ENCODE measurements at regions of chr17 and their contacts with region 1.

Region 1: GRCh38 chr17:73371285-73371684 is 59.5 kb upstream of the CDC42EP4 start:
- DNase-seq: no peak
- ATAC-seq: no peak
- H3K4me3 ChIP-seq: no peak overlapping the region
- H3K27ac ChIP-seq: no peak overlapping the region
- H3K4me1 ChIP-seq: peaks cover 6 to 7% of the 10 kb centered on the region in 2 donors
- H3K27me3 ChIP-seq: no peaks in the 10 kb centered on the region
- CTCF ChIP-seq: no peak
- POLR2A ChIP-seq: no peak

Region 2: GRCh38 chr17:72725433-72726068 is 645.7 kb before region 1 on chr17:
- in situ Hi-C with region 1: loop called in 3 of 4 experiments (anchors 25 kb)
- intact Hi-C with region 1: loop called (anchors 5 kb)
- DNase-seq: no peak
- ATAC-seq: peak in 1 of 2 donors; percentile 30
- H3K4me3 ChIP-seq: no peak overlapping the region
- H3K27ac ChIP-seq: no peak overlapping the region
- H3K4me1 ChIP-seq: no peaks in the 10 kb centered on the region
- H3K27me3 ChIP-seq: no peaks in the 10 kb centered on the region
- CTCF ChIP-seq: peak; percentile 33 to 71 (median 55)
- POLR2A ChIP-seq: no peak

Region 3: DNA sequence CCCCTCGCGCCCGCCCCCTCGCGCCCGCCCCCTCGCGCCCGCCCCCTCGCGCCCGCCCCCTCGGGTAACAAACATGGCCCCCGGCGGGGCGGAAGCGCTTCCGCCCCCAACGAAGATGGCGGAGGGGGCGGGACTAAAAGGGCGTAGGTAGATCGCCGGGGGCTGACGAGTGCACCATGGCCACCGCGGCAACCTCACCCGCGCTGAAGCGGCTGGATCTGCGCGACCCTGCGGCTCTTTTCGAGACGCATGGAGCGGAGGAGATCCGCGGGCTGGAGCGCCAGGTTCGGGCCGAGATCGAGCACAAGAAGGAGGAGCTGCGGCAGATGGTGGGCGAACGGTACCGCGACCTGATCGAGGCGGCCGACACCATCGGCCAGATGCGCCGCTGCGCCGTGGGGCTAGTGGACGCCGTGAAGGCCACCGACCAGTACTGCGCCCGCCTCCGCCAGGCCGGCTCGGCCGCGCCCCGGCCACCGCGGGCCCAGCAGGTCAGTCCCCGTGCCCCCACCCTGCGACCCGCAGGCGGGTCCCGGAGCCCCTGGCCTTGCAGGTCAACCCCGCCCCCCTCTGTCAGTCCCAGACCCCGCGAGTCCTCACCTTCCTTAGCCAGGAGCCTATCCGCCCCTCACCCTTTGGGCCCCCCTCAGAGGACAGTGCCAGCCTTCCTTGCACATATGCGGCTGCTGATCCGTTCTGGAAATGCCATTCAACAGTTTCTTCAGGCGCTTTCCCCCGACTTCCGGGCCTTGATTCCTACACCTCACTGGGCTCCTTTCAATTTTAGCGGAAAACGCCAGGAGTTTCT is 178.2 kb before region 1 on chr17 and contains the start of gene COG1:
- in situ Hi-C with region 1: loop called in 1 of 4 experiments (anchors 10 kb)
- intact Hi-C with region 1: loop called (anchors 2 kb)
- DNase-seq: peak; percentile 59 to 82
- ATAC-seq: peak; percentile 83 to 85
- H3K4me3 ChIP-seq: peak within 1 kb of the TSS; percentile 55 to 100 (median 86)
- H3K27ac ChIP-seq: peak within 1 kb of the TSS; percentile 92 to 97 (median 95)
- H3K4me1 ChIP-seq: peaks cover 13 to 17% of the 10 kb centered on the region in 2 donors
- H3K27me3 ChIP-seq: no peaks in the 10 kb centered on the region
- CTCF ChIP-seq: no peak
- POLR2A ChIP-seq: peak in 1 of 2 donors; percentile 14
- total RNA-seq, gene COG1: 21.2 to 34.7 (median 26.7) TPM

Region 4: DNA sequence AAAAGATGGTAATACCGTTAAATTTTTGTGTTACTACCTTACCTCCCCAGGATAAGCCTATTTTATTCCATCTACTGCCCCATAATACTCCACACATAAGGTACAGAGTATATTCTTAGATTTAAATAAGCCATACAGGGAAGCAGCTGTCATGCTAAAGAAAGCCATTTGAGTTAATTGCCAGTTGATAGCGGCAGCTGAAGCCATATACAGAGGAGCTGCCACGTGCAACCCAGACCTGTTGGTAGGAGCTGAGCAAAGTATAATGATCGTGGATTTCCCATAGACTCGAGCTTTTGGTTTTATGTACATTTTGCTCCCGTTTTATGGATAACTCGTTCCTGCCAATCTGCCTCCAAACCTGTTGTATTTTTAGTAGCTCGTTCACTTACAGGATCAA is 121.6 kb before region 1 on chr17:
- in situ Hi-C with region 1: loop called in 2 of 4 experiments (anchors 5 kb)
- intact Hi-C with region 1: no loop called
- DNase-seq: no peak
- ATAC-seq: no peak
- H3K4me3 ChIP-seq: no peak overlapping the region
- H3K27ac ChIP-seq: no peak overlapping the region
- H3K4me1 ChIP-seq: no peaks in the 10 kb centered on the region
- H3K27me3 ChIP-seq: no peaks in the 10 kb centered on the region
- CTCF ChIP-seq: no peak
- POLR2A ChIP-seq: no peak

Region 5: GRCh38 chr17:73255671-73256181 is 115.6 kb before region 1 on chr17:
- in situ Hi-C with region 1: loop called (anchors 5 kb)
- intact Hi-C with region 1: loop called (anchors 1 kb)
- DNase-seq: peak in 1 of 2 donors; percentile 15
- ATAC-seq: peak; percentile 60 to 75
- H3K4me3 ChIP-seq: no peak overlapping the region
- H3K27ac ChIP-seq: no peak overlapping the region
- H3K4me1 ChIP-seq: no peaks in the 10 kb centered on the region
- H3K27me3 ChIP-seq: no peaks in the 10 kb centered on the region
- CTCF ChIP-seq: peak; percentile 95 to 98 (median 97)
- POLR2A ChIP-seq: no peak

Region 6: DNA sequence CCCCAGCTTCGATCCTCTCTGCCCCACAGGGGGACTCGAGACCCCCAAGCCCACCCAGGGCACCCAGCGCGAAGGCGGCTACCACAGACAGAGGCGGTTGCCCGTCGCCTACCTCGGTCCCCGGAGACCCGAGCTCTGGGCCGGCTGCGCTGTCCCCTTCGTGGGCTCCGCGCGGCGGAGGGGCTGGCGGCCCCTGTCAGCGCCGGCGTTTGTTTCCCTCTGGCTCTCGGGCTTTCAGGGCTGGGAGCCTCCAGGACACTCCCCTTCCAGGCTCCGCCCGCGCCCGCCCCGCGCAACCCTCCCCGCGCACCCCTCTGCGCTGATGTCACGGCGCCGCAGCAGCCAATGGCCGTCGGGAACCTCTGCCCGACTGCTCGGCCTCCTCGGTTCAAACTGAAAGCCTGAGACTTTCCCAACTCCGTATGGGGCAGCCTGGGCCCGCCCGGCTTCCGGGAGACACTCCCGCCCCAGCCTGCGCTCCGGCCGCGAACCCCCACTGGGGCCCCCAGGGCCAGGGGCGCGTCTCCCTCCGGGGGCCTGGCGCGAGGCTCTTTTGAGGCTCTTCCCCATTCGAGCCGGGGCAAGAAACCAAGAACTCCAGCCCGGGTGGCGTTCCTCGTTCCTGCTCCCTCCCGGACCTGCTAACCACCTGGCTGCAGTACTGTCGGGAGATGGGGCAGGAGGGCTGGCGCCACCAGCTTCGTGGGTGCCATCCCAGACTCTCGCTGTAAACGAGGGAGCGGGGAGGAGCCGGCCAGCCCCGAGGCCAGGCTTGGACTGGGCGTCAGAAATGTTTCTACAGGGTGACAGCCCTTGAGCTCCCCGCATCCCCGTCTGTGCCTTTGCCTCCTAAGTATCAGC is 59.3 kb before region 1 on chr17 and contains the start of gene CDC42EP4:
- in situ Hi-C with region 1: no loop called
- intact Hi-C with region 1: loop called (anchors 2 kb)
- DNase-seq: peak; percentile 92 to 94
- ATAC-seq: peak; percentile 80 to 83
- H3K4me3 ChIP-seq: peak within 1 kb of the TSS; percentile 82 to 100 (median 94)
- H3K27ac ChIP-seq: peak within 1 kb of the TSS; percentile 92 to 100 (median 98)
- H3K4me1 ChIP-seq: peaks cover 19 to 33% of the 10 kb centered on the region in 2 donors
- H3K27me3 ChIP-seq: no peaks in the 10 kb centered on the region
- CTCF ChIP-seq: no peak
- POLR2A ChIP-seq: peak; percentile 97 to 98
- total RNA-seq, gene CDC42EP4: 35.8 to 57.0 (median 47.1) TPM